Posterior vena cava (tissue), 2 donors: ENCODE measurements at regions of chr10 and their contacts with region 1.

Region 1: GRCh38 chr10:100562008-100562711 is 26.4 kb downstream of the HIF1AN start:
- DNase-seq: peak; percentile 87

Region 2: GRCh38 chr10:100508691-100509150 is 53.4 kb before region 1 on chr10:
- intact Hi-C with region 1: no loop called
- DNase-seq: no peak

Region 3: DNA sequence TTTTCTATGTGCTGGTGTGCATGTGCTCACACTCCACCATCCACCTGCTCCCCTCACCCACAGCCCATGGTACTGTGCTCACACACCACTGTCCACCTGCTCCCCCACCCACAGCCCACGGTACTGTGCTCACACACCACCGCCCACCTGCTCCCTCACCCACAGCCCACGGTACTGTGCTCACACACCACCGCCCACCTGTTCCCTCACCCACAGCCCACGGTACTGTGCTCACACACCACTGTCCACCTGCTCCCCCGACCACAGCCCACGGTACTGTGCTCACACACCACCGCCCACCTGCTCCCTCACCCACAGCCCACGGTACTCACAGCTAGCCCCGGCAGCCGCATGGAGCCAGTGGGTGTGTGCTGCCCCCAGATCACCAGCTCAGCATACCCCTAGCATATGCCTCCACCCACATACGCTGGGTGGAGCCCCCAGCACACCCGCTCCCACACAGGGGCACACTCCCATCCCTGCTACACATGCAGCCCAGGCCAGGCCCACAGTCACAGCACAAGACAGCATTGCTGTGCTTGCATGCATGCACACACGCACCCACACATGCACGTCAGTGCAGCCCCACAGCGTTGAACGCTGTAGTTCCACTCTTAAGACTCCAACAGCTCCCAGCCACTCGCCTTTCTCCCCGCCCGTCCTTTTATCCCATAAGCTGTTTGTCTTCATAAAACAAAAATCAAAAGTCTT is 245.2 kb after region 1 on chr10:
- intact Hi-C with region 1: no loop called
- DNase-seq: peak; percentile 59

Region 4: GRCh38 chr10:100864978-100865377 is 302.8 kb after region 1 on chr10:
- intact Hi-C with region 1: loop called in 1 of 2 experiments (anchors 10 kb)
- DNase-seq: no peak